Posterior vena cava (tissue), 2 donors: ENCODE measurements at regions of chr7 and their contacts with region 1.

Region 1: DNA sequence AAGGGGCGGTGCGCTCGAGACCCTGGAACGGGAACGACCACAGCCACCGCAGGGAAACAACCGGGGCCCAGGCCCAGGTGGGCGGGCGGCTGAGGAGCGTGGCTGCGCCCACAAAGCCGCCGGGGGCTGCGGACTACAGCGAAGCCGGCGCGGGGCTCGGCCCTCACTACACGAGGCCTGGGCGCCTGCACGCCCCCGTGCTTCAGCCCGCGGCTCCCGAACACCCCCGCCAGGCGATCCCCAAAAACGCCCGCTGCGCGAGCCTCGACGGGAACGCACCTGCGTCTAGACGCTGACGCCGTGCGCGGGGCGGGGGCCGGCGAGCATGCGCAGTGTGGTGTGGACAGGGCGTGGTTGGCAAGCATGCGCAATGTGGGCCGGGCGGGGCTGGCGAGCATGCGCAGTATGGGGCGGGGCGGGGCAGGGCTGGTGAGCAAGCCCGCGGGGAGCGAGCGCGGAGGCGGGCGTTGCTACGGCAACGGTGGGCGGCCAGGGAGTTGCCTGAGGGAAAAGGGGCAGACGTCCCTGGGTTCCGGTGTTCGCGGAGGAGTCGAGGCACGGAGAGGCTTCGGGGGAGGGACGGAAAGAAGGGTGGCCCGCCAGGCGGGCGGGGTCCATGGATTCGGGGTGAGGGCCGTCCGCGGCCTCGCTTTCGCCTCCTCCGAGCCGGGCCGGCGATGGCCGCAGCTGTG is at the start of gene RNF32:
- DNase-seq: peak; percentile 98
- total RNA-seq, gene RNF32: 0.33 TPM in 1 of 2 donors, not detected in the other

Region 2: GRCh38 chr7:158633055-158633956 is 1992.9 kb after region 1 on chr7:
- intact Hi-C with region 1: loop called in 1 of 2 experiments (anchors 5 kb)
- DNase-seq: no peak